ENCODE measurements at regions of chr7 and their contacts with region 1.

Region 1: DNA sequence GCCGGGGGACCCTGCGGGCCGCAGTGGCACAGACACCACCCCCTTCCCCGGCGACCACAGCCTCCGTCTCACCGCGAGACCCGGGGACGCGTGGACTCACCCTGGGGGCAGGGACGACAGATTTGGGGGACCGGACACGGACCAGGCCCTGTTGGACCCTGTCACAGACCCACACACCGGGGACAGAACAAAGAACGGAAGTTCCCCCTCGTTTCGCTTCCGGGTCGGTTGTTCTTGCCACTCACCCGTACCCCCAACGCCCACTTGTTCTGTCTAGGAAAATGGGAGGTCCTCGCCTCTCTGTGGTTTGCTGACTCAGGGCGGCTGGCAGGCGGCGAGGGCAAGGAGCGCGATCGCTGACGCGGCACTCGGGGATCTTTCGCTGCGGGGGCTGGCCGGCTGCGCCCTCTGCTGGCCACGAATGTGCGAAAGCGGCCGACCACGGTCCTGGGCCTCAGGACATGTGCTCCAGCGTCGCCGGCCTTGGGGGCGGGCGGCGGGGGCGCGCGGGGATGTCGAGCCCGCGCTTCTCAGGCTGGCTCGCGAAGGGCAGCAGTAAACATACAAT is at the start of gene ZNF3:
- DNase-seq: peak; percentile 100
- total RNA-seq, gene ZNF3: 17.0 to 18.0 TPM

Region 2: GRCh38 chr7:99184532-99185218 is 896.9 kb before region 1 on chr7:
- intact Hi-C with region 1: no loop called
- DNase-seq: peak; percentile 37

Region 3: GRCh38 chr7:100049441-100050311 is 31.9 kb before region 1 on chr7 and contains the start of gene ZSCAN21:
- intact Hi-C with region 1: loop called in 1 of 2 experiments (anchors 2 kb)
- DNase-seq: peak; percentile 96
- total RNA-seq, gene ZSCAN21: 9.2 to 10.7 TPM

Region 4: GRCh38 chr7:100247152-100247757 is 165.6 kb after region 1 on chr7:
- intact Hi-C with region 1: no loop called
- DNase-seq: no peak